CD14-positive monocyte (primary cell): ENCODE measurements at regions of chr7 and their contacts with region 1.

Region 1: GRCh38 chr7:31443457-31443856 is 70.4 kb upstream of the ITPRID1 start:
- DNase-seq: peak; percentile 24 to 63 (median 46)
- H3K4me3 ChIP-seq: no peak overlapping the region
- H3K4me3 Mint-ChIP-seq: no peak overlapping the region
- H3K27ac ChIP-seq: no peak overlapping the region
- H3K27ac Mint-ChIP-seq: peak overlapping the region in 1 of 7 donors; percentile 1
- H3K4me1 ChIP-seq: no peaks in the 10 kb centered on the region
- H3K4me1 Mint-ChIP-seq: no peaks in the 10 kb centered on the region
- H3K27me3 ChIP-seq: no peaks in the 10 kb centered on the region
- H3K27me3 Mint-ChIP-seq: peaks cover 0 to 5% (median 5%) of the 10 kb centered on the region in 3 donors
- CTCF ChIP-seq: peak; percentile 85

Region 2: DNA sequence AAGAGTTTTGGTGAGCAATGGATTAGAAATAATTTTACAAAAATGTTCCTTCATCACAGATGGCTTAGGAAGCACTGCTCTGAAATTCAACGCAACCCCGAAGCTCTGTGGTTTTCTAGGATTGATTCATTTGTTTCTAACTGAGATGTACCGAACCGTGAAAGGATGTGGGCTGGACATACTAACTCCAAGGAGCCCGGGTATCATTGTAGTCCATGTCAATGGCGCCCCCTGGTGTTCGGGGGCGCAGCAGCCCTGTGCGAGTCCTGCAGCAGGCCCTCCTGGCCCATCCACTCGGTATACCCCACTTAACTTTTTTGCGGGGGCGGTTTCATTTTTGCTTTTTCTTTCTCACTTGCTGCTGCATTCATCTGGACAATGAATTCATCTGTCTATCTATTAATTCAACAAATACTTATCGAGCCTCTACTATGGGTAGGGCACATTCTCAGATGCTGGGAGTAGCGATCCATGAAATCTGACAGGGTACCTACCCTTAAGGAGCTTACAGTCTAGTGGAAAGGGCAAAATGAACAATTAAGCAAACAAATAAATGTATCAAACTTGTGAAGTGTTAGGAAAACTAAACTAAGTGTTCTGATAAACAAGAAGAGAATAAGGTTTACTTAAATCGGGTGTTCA is 45.2 kb after region 1 on chr7:
- intact Hi-C with region 1: loop called in 1 of 2 experiments (anchors 5 kb)
- DNase-seq: peak; percentile 3 to 41 (median 31)
- H3K4me3 ChIP-seq: no peak overlapping the region
- H3K4me3 Mint-ChIP-seq: no peak overlapping the region
- H3K27ac ChIP-seq: no peak overlapping the region
- H3K27ac Mint-ChIP-seq: no peak overlapping the region
- H3K4me1 ChIP-seq: peaks cover 0 to 3% of the 10 kb centered on the region in 2 donors
- H3K4me1 Mint-ChIP-seq: peaks cover 4% of the 10 kb centered on the region
- H3K27me3 ChIP-seq: no peaks in the 10 kb centered on the region
- H3K27me3 Mint-ChIP-seq: peaks cover 2 to 5% (median 2%) of the 10 kb centered on the region in 3 donors
- CTCF ChIP-seq: peak; percentile 81

Region 3: GRCh38 chr7:31633894-31634494 is 190.5 kb after region 1 on chr7:
- intact Hi-C with region 1: loop called in 1 of 2 experiments (anchors 5 kb)
- DNase-seq: peak; percentile 10 to 45 (median 21)
- H3K4me3 ChIP-seq: no peak overlapping the region
- H3K4me3 Mint-ChIP-seq: no peak overlapping the region
- H3K27ac ChIP-seq: no peak overlapping the region
- H3K27ac Mint-ChIP-seq: no peak overlapping the region
- H3K4me1 ChIP-seq: no peaks in the 10 kb centered on the region
- H3K4me1 Mint-ChIP-seq: no peaks in the 10 kb centered on the region
- H3K27me3 ChIP-seq: no peaks in the 10 kb centered on the region
- H3K27me3 Mint-ChIP-seq: peaks cover 5 to 15% (median 14%) of the 10 kb centered on the region in 3 donors
- CTCF ChIP-seq: peak; percentile 23